Activated T-helper 1 cell treated with anti-CD3 and anti-CD28 coated beads, Interleukin-12 subunit alpha, Interleukin-12 subunit beta, Interleukin-2, Interleukin-4 antibody, amounts not matched to agents 30 ng/mL and 10 ng/mL and 1 ng/mL, durations not matched to agents 14 hours and 24 hours and 36 hours (primary cell): ENCODE measurements at regions of chr17 and their contacts with region 1.

Region 1: GRCh38 chr17:30116661-30117551 is at the start of gene NSRP1:
- DNase-seq: peak; percentile 92
- H3K4me3 Mint-ChIP-seq: peak within 1 kb of the TSS; percentile 100
- H3K27ac Mint-ChIP-seq: peak within 1 kb of the TSS; percentile 99
- H3K4me1 Mint-ChIP-seq: peaks cover 69% of the 10 kb centered on the region
- H3K27me3 Mint-ChIP-seq: no peaks in the 10 kb centered on the region
- total RNA-seq, gene NSRP1: 32.4 and 35.3 TPM in 2 replicates

Region 2: DNA sequence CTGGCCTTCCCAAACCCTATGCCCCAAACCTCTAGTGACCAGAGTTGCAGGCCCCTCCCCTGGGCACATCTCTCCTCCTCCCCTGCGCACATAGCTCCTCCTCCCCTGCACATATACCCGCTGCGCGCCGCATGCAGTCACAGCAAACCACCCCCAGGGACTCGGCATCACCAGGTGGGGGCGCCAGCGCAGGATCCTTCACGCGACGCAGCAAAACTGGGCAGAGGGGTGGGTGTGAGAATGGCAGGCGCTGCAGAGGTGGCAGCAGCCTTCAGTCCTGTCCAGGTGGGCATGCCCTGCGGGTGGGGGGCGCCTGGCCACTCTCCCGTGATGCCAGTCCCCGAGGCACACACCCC is 499.8 kb before region 1 on chr17:
- intact Hi-C with region 1: loop called (anchors 10 kb)
- DNase-seq: peak; percentile 86
- H3K4me3 Mint-ChIP-seq: peak overlapping the region; percentile 81
- H3K27ac Mint-ChIP-seq: peak overlapping the region; percentile 66
- H3K4me1 Mint-ChIP-seq: peaks cover 40% of the 10 kb centered on the region
- H3K27me3 Mint-ChIP-seq: peaks cover 8% of the 10 kb centered on the region

Region 3: GRCh38 chr17:30104575-30105339 is 12.1 kb before region 1 on chr17:
- intact Hi-C with region 1: loop called (anchors 1 kb)
- DNase-seq: peak; percentile 58
- H3K4me3 Mint-ChIP-seq: peak overlapping the region; percentile 82
- H3K27ac Mint-ChIP-seq: no peak overlapping the region
- H3K4me1 Mint-ChIP-seq: peaks cover 6% of the 10 kb centered on the region
- H3K27me3 Mint-ChIP-seq: peaks cover 17% of the 10 kb centered on the region

Region 4: DNA sequence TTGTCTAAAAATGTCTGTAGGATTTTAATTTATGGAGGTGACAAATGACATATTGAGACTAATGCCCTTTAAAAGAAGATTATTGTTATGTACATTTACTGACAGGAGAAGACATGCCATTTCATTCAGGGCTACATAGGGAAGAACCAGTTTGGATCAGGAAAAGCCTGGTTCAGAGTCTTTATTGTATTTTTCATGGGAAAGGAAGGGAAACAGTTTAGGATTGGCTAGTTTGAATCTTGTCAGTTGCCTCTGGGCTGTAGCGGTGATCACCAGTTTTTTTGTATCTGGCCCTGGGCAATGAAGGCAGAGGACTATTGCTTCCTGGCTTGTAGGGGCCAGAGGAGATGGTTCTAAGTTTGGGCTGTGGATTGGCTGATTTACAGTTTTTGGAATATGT is 31.5 kb after region 1 on chr17:
- intact Hi-C with region 1: no loop called
- DNase-seq: no peak
- H3K4me3 Mint-ChIP-seq: no peak overlapping the region
- H3K27ac Mint-ChIP-seq: peak overlapping the region; percentile 38
- H3K4me1 Mint-ChIP-seq: peaks cover 10% of the 10 kb centered on the region
- H3K27me3 Mint-ChIP-seq: no peaks in the 10 kb centered on the region

Region 5: GRCh38 chr17:30236766-30237165 is 119.9 kb after region 1 on chr17:
- intact Hi-C with region 1: loop called (anchors 5 kb)
- DNase-seq: no peak
- H3K4me3 Mint-ChIP-seq: peak overlapping the region; percentile 19
- H3K27ac Mint-ChIP-seq: no peak overlapping the region
- H3K4me1 Mint-ChIP-seq: peaks cover 11% of the 10 kb centered on the region
- H3K27me3 Mint-ChIP-seq: peaks cover 69% of the 10 kb centered on the region

Region 6: DNA sequence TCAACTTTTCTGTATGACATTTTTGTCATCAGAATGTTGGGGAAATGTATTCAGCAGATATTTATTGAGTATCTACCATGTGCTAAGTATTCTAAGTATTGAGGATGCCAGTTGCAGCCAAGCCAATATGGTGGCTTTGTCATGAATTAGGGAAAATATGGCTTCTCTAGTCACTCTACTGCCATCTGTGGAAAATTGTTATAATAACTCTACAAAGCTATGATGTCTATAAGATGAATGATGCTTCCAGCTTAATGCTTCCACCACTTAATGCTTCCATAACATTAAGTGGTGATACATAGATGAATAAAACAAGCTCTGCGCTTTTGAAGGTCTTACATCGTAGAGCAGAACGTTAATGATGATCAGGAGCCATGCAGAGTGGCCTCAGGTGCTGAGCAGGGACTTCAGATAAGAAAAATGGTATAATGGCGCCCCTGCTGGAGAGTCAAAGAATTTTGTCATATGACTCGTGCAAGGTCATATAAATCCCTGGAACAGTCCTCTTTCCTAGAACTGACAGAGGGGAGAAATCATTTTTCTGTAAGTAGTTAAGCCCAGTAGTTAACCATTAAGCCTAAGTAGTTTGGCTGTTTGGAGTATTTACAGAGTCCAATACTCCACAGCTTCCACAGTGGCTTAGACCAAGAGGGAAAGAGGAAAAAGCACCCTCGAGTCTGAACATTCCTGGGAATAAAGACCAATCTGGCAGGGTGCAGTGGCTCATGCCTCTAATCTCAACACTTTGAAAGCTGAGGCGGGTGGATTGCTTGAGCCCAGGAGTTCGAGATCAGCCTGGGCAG is 219.7 kb after region 1 on chr17:
- intact Hi-C with region 1: loop called (anchors 1 kb)
- DNase-seq: peak; percentile 47
- H3K4me3 Mint-ChIP-seq: no peak overlapping the region
- H3K27ac Mint-ChIP-seq: no peak overlapping the region
- H3K4me1 Mint-ChIP-seq: peaks cover 42% of the 10 kb centered on the region
- H3K27me3 Mint-ChIP-seq: peaks cover 3% of the 10 kb centered on the region

Region 7: GRCh38 chr17:30378824-30379302 is 262.0 kb after region 1 on chr17 and contains the start of gene CPD:
- intact Hi-C with region 1: loop called (anchors 2 kb)
- DNase-seq: peak; percentile 97
- H3K4me3 Mint-ChIP-seq: peak within 1 kb of the TSS; percentile 92
- H3K27ac Mint-ChIP-seq: peak within 1 kb of the TSS; percentile 97
- H3K4me1 Mint-ChIP-seq: peaks cover 67% of the 10 kb centered on the region
- H3K27me3 Mint-ChIP-seq: no peaks in the 10 kb centered on the region
- total RNA-seq, gene CPD: 29.7 and 35.3 TPM in 2 replicates

Region 8: DNA sequence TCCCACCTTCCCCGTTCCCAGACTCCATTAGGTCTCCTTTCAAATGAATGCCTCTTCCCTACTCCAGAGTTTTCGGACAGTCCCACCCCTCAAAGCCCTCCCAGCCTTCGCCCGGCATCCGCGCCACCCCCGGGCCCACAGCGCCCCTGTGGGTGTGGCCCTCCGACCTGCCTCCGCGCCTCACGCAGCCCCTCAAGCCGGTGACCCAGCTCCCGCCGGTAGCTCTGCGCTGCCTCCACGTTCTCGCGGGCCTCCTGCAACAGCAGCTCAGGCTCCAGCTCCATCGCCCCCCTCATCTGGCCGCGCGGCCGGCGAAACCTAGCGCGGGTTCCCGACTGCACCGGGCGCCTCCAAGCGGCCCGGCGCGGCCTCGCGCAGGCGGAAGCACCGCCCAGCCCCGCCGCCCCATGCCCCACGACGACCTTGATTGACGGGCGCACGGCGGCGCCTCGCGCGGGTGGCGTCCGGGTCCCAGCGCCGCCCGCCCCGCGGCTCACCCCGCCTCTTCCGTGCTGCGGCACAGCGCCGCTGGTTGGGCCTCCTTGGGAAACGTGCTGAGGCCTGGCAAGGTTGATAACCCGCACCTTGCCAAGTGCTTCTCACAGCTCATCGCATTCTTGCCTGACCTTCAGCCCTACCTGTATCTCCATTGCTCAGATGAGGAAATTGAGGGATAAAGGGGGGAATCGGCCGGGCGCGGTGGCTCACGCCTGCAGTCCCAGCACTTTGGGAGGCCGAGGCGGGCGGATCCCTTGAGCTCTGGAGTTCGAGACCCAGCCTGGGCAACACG is 707.6 kb after region 1 on chr17 and contains the start of gene CRLF3:
- intact Hi-C with region 1: loop called (anchors 10 kb)
- DNase-seq: peak; percentile 90
- H3K4me3 Mint-ChIP-seq: peak within 1 kb of the TSS; percentile 100
- H3K27ac Mint-ChIP-seq: peak within 1 kb of the TSS; percentile 89
- H3K4me1 Mint-ChIP-seq: peaks cover 30% of the 10 kb centered on the region
- H3K27me3 Mint-ChIP-seq: no peaks in the 10 kb centered on the region
- total RNA-seq, gene CRLF3: 45.6 and 49.5 TPM in 2 replicates